ENCODE measurements at regions of chr11 and their contacts with region 1.

Region 1: GRCh38 chr11:32792948-32793475 is 1.4 kb downstream of the CCDC73 start:
- DNase-seq: peak; percentile 80
- ATAC-seq: peak; percentile 55
- H3K4me3 Mint-ChIP-seq: no peak overlapping the region
- H3K27ac Mint-ChIP-seq: no peak overlapping the region
- H3K4me1 Mint-ChIP-seq: no peaks in the 10 kb centered on the region
- H3K27me3 Mint-ChIP-seq: peaks cover 11% of the 10 kb centered on the region

Region 2: GRCh38 chr11:32326522-32326921 is 466.5 kb before region 1 on chr11:
- CTCF ChIA-PET with region 1: interaction called, 23 read pairs
- POLR2A ChIA-PET with region 1: no interaction called
- intact Hi-C with region 1: loop called (anchors 1 kb)
- DNase-seq: no peak
- ATAC-seq: no peak
- H3K4me3 Mint-ChIP-seq: no peak overlapping the region
- H3K27ac Mint-ChIP-seq: no peak overlapping the region
- H3K4me1 Mint-ChIP-seq: no peaks in the 10 kb centered on the region
- H3K27me3 Mint-ChIP-seq: peaks cover 10% of the 10 kb centered on the region

Region 3: GRCh38 chr11:32374261-32374711 is 418.7 kb before region 1 on chr11:
- CTCF ChIA-PET with region 1: no interaction called
- POLR2A ChIA-PET with region 1: no interaction called
- intact Hi-C with region 1: loop called in 1 of 2 experiments (anchors 1 kb)
- DNase-seq: peak; percentile 76
- ATAC-seq: peak; percentile 57
- H3K4me3 Mint-ChIP-seq: no peak overlapping the region
- H3K27ac Mint-ChIP-seq: no peak overlapping the region
- H3K4me1 Mint-ChIP-seq: no peaks in the 10 kb centered on the region
- H3K27me3 Mint-ChIP-seq: peaks cover 2% of the 10 kb centered on the region

Region 4: GRCh38 chr11:32435511-32435941 is 357.5 kb before region 1 on chr11 and contains the start of gene WT1:
- CTCF ChIA-PET with region 1: no interaction called
- POLR2A ChIA-PET with region 1: no interaction called
- intact Hi-C with region 1: loop called (anchors 10 kb)
- DNase-seq: peak; percentile 21
- ATAC-seq: no peak
- H3K4me3 Mint-ChIP-seq: peak within 1 kb of the TSS; percentile 13
- H3K27ac Mint-ChIP-seq: no peak within 1 kb of the TSS
- H3K4me1 Mint-ChIP-seq: peaks cover 37% of the 10 kb centered on the region
- H3K27me3 Mint-ChIP-seq: peaks cover 78% of the 10 kb centered on the region
- total RNA-seq, gene WT1: not detected

Region 5: GRCh38 chr11:32701616-32702015 is 91.4 kb before region 1 on chr11:
- CTCF ChIA-PET with region 1: no interaction called
- POLR2A ChIA-PET with region 1: no interaction called
- intact Hi-C with region 1: no loop called
- DNase-seq: no peak
- ATAC-seq: no peak
- H3K4me3 Mint-ChIP-seq: no peak overlapping the region
- H3K27ac Mint-ChIP-seq: no peak overlapping the region
- H3K4me1 Mint-ChIP-seq: no peaks in the 10 kb centered on the region
- H3K27me3 Mint-ChIP-seq: peaks cover 12% of the 10 kb centered on the region

Region 6: DNA sequence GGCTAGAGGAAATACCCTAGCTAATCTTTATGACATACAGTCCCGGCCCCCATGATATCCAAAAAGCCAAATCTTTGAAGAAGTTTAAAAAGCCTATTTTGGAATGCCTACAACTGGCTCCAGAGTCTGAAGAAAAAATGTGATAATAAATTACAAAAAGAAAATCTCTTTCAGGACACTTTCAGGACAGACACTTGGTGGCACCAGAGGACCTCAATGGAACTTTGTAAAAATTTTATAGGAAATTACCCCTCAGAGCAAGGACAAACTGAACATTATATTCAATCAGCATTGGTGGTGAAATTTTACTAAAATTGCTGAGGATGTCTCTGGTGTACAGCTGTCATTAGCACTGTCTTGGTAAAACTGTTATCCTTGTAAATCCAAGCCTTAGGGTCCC is 79.5 kb before region 1 on chr11:
- CTCF ChIA-PET with region 1: no interaction called
- POLR2A ChIA-PET with region 1: no interaction called
- intact Hi-C with region 1: loop called (anchors 1 kb)
- DNase-seq: peak; percentile 11
- ATAC-seq: no peak
- H3K4me3 Mint-ChIP-seq: no peak overlapping the region
- H3K27ac Mint-ChIP-seq: no peak overlapping the region
- H3K4me1 Mint-ChIP-seq: no peaks in the 10 kb centered on the region
- H3K27me3 Mint-ChIP-seq: peaks cover 16% of the 10 kb centered on the region

Region 7: DNA sequence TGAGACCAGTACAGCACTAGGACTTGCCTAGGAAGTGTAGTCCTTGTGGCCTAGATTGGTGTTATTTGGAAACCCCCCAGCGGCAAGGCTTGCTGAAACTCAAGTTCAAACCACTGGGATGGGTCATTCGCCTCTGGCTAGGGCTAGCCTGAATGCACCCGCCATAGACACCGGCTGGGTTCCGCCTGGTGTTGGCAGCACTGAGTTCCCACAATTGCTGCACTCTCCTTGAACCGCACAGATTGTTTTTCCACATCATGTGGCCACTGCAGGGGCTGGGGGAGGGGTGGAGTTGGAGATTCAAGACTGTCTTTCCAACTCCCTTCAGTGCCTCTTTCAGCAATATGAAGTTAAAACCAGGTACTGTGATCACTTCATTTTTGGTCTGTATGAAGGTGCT is 41.6 kb before region 1 on chr11:
- CTCF ChIA-PET with region 1: interaction called, 11 read pairs
- POLR2A ChIA-PET with region 1: no interaction called
- intact Hi-C with region 1: loop called in 1 of 2 experiments (anchors 5 kb)
- DNase-seq: no peak
- ATAC-seq: no peak
- H3K4me3 Mint-ChIP-seq: no peak overlapping the region
- H3K27ac Mint-ChIP-seq: no peak overlapping the region
- H3K4me1 Mint-ChIP-seq: no peaks in the 10 kb centered on the region
- H3K27me3 Mint-ChIP-seq: peaks cover 12% of the 10 kb centered on the region